Gastrocnemius medialis (tissue), 4 donors: ENCODE measurements at regions of chr6 and their contacts with region 1.

Region 1: GRCh38 chr6:84411060-84411629 is 183.7 kb upstream of the CEP162 start:
- DNase-seq: no peak
- ATAC-seq: no peak
- H3K4me3 ChIP-seq: no peak overlapping the region
- H3K27ac ChIP-seq: no peak overlapping the region
- H3K4me1 ChIP-seq: no peaks in the 10 kb centered on the region
- H3K27me3 ChIP-seq: no peaks in the 10 kb centered on the region
- CTCF ChIP-seq: no peak
- POLR2A ChIP-seq: no peak

Region 2: GRCh38 chr6:84549883-84550282 is 138.7 kb after region 1 on chr6:
- in situ Hi-C with region 1: no loop called
- intact Hi-C with region 1: loop called (anchors 10 kb)
- DNase-seq: no peak
- ATAC-seq: no peak
- H3K4me3 ChIP-seq: no peak overlapping the region
- H3K27ac ChIP-seq: no peak overlapping the region
- H3K4me1 ChIP-seq: no peaks in the 10 kb centered on the region
- H3K27me3 ChIP-seq: no peaks in the 10 kb centered on the region
- CTCF ChIP-seq: no peak
- POLR2A ChIP-seq: no peak